ENCODE measurements at regions of chr1 and their contacts with region 1.

Region 1: DNA sequence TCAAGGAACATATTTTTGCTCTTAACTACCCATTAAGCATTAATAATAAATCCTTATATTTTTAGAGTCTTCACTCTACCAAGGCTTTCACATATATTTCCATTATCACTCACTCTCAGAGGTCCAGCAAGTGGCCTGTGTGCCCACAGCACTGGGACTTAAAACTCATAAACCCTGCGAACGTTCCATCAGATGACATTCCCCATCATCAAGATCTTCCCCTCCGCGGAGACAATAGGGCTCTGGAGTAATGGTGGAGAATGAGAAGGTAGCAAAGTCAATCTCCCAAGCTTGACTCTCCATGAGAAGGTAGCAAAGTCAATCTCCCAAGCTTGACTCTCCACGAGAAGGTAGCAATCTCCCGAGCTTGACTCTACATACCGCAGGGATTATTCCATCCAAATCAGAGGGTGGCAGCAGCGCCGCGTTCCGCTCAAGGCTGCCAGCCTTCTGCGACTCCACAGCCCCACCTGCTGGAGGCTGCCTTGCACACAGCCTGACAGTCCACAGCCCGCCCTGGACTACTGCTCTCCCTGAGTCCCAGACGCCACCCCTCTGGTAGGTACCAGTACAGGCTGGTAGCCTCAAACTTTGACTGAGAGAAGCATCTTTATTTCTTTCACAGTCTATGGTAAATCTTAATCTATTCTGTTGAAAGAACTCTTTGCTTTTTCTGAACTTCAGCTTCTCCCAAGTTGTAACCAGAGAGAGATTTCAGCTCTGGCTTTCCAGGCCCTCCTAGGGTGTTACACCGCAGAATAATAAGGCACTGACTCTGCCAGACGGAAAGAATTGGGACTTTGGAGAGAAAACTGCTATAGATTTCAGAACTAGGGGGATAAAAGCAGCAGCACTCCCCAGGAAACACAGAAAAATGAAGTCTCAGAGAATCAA is 26.4 kb upstream of the CTTNBP2NL start:
- DNase-seq: no peak
- ATAC-seq: peak; percentile 100
- H3K4me3 ChIP-seq: no peak overlapping the region
- H3K27ac ChIP-seq: no peak overlapping the region
- H3K4me1 ChIP-seq: no peaks in the 10 kb centered on the region
- H3K27me3 ChIP-seq: no peaks in the 10 kb centered on the region; a peak in 2 of 4 replicates
- CTCF ChIP-seq: peak; percentile 96 to 99 (median 99); a peak in 5 of 6 replicates
- EP300 ChIP-seq: no peak
- POLR2A ChIP-seq: no peak
- RAD21 ChIP-seq: peak; percentile 80

Region 2: GRCh38 chr1:112298558-112298957 is 71.1 kb before region 1 on chr1:
- CTCF ChIA-PET with region 1: interaction called, 16 read pairs
- POLR2A ChIA-PET with region 1: no interaction called
- RAD21 ChIA-PET with region 1: no interaction called
- SMC1A ChIA-PET with region 1: interaction called, 4 read pairs
- in situ Hi-C with region 1: no loop called
- intact Hi-C with region 1: loop called (anchors 2 kb)
- DNase-seq: no peak
- ATAC-seq: peak; percentile 58
- H3K4me3 ChIP-seq: no peak overlapping the region
- H3K27ac ChIP-seq: no peak overlapping the region
- H3K4me1 ChIP-seq: 0 out of 2 replicates have a peak, but pooled peaks cover 3% of the 10 kb centered on the region
- H3K27me3 ChIP-seq: no peaks in the 10 kb centered on the region; a peak in 1 of 4 replicates
- CTCF ChIP-seq: peak; percentile 42 to 51 (median 51)
- EP300 ChIP-seq: no peak
- POLR2A ChIP-seq: no peak
- RAD21 ChIP-seq: peak; percentile 37

Region 3: GRCh38 chr1:112358798-112359408 is 10.7 kb before region 1 on chr1:
- CTCF ChIA-PET with region 1: interaction called, 107 read pairs
- POLR2A ChIA-PET with region 1: no interaction called
- RAD21 ChIA-PET with region 1: interaction called, 7 read pairs
- SMC1A ChIA-PET with region 1: interaction called, 38 read pairs
- in situ Hi-C with region 1: no loop called
- intact Hi-C with region 1: no loop called
- DNase-seq: no peak
- ATAC-seq: peak; percentile 96
- H3K4me3 ChIP-seq: no peak overlapping the region
- H3K27ac ChIP-seq: no peak overlapping the region
- H3K4me1 ChIP-seq: peaks cover 6% of the 10 kb centered on the region; the same call in 1 of the 2 replicates
- H3K27me3 ChIP-seq: no peaks in the 10 kb centered on the region; a peak in 1 of 4 replicates
- CTCF ChIP-seq: peak; percentile 78 to 81 (median 78)
- EP300 ChIP-seq: no peak
- POLR2A ChIP-seq: no peak
- RAD21 ChIP-seq: peak; percentile 63

Region 4: DNA sequence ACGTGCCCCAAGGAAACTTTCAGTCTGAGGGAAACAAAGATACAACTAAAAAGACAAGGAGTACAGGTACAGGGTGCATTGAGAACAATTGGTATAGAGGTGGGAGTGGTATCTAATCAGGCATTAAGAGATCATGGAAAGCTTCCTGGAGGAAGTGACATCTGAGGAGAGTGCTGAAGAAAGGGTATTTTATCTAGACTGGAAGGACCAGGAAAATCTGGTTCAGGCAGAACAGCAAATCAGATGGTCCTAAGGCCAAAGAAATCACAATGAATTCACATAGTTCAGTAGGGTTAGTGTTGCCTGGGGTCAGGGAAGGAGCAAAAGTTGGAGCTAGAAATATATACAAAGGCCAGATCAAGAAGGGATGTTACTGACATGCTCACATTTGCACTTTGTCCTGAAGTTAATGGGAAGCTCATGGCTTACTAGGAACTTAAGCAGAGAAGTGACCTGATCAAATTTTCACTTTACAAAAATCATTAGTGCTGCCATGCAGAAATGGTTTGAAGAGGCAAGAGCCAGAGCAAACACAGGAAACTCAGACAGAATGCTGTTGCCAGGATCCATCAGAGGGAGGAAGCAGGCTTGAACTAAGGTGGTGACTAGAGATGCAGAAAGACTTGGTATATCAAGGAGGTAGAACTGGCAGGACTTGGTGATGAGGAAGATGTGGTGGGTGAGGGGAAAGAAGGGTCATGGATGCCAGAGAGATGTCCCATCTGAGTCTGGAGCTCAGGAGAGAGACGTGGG is 11.9 kb after region 1 on chr1:
- CTCF ChIA-PET with region 1: interaction called, 21 read pairs
- POLR2A ChIA-PET with region 1: no interaction called
- RAD21 ChIA-PET with region 1: no interaction called
- SMC1A ChIA-PET with region 1: interaction called, 7 read pairs
- in situ Hi-C with region 1: no loop called
- intact Hi-C with region 1: no loop called
- DNase-seq: no peak
- ATAC-seq: no peak
- H3K4me3 ChIP-seq: no peak overlapping the region
- H3K27ac ChIP-seq: no peak overlapping the region
- H3K4me1 ChIP-seq: no peaks in the 10 kb centered on the region
- H3K27me3 ChIP-seq: peaks cover 0 to 4% of the 10 kb centered on the region in 2 experiments; a peak in 1 of 4 replicates
- CTCF ChIP-seq: no peak
- EP300 ChIP-seq: no peak
- POLR2A ChIP-seq: no peak
- RAD21 ChIP-seq: no peak

Region 5: DNA sequence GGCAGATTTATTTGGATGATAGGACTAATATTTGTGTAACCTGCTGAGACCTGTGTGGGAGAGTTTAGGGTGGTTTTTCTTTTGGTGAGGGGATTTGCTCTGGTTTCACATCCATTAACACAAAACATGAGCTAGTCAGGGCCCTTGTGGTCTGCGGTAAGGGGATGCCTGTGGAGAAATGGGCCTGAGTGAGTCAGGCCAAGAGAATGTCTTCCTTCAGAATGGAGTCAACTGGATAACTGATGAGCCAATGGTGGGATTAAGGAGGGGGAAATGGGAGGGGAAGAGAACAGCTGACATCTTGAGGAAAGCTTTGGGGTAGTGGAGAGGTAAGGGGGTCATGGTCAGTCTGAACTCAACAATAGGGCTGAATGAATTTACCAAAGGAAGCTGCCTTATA is 153.0 kb after region 1 on chr1:
- CTCF ChIA-PET with region 1: no interaction called
- POLR2A ChIA-PET with region 1: no interaction called
- RAD21 ChIA-PET with region 1: no interaction called
- SMC1A ChIA-PET with region 1: no interaction called
- in situ Hi-C with region 1: no loop called
- intact Hi-C with region 1: no loop called
- DNase-seq: no peak
- ATAC-seq: no peak
- H3K4me3 ChIP-seq: no peak overlapping the region
- H3K27ac ChIP-seq: no peak overlapping the region
- H3K4me1 ChIP-seq: no peaks in the 10 kb centered on the region; the same call in 1 of the 2 replicates
- H3K27me3 ChIP-seq: no peaks in the 10 kb centered on the region
- CTCF ChIP-seq: no peak
- EP300 ChIP-seq: no peak
- POLR2A ChIP-seq: no peak
- RAD21 ChIP-seq: no peak

Measured in GM12878 (cell line).